Activated T-helper 1 cell treated with anti-CD3 and anti-CD28 coated beads, Interleukin-12 subunit alpha, Interleukin-12 subunit beta, Interleukin-2, Interleukin-4 antibody, amounts not matched to agents 30 ng/mL and 10 ng/mL and 1 ng/mL, durations not matched to agents 14 hours and 24 hours and 36 hours (primary cell): ENCODE measurements at regions of chr18 and their contacts with region 1.

Region 1: DNA sequence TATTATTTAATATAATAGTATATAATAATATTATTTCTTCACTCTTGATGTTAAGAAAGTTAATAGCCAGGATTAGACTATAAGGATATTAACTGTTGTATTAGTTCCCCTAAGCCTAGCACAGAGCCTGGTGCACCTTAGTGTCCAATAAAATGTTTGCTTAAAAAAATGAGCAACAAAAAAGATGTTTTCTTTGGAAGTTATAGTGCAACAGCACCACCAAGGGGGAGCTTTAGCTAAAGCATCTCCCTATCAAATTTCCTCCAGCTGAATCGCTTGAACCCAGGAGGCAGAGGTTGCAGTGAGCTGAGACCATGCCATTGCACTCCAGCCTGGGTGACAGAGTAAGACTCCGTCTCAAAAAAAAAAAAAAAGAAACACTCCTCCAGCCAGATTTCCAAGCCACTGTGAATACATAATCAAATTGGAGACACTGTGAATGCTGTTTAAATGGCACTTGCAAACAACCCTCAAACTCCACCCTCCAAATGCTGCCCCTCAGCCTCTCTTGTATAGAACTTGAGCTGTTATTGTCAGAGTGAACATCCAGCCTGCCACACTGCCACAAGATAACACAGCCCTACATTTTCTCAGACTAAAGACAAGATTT is 221.9 kb downstream of the DYM start:
- DNase-seq: no peak
- H3K4me3 Mint-ChIP-seq: no peak overlapping the region
- H3K27ac Mint-ChIP-seq: no peak overlapping the region
- H3K4me1 Mint-ChIP-seq: no peaks in the 10 kb centered on the region
- H3K27me3 Mint-ChIP-seq: no peaks in the 10 kb centered on the region

Region 2: GRCh38 chr18:49094979-49095632 is 143.4 kb before region 1 on chr18:
- intact Hi-C with region 1: loop called (anchors 5 kb)
- DNase-seq: no peak
- H3K4me3 Mint-ChIP-seq: no peak overlapping the region
- H3K27ac Mint-ChIP-seq: no peak overlapping the region
- H3K4me1 Mint-ChIP-seq: peaks cover 6% of the 10 kb centered on the region
- H3K27me3 Mint-ChIP-seq: no peaks in the 10 kb centered on the region

Region 3: DNA sequence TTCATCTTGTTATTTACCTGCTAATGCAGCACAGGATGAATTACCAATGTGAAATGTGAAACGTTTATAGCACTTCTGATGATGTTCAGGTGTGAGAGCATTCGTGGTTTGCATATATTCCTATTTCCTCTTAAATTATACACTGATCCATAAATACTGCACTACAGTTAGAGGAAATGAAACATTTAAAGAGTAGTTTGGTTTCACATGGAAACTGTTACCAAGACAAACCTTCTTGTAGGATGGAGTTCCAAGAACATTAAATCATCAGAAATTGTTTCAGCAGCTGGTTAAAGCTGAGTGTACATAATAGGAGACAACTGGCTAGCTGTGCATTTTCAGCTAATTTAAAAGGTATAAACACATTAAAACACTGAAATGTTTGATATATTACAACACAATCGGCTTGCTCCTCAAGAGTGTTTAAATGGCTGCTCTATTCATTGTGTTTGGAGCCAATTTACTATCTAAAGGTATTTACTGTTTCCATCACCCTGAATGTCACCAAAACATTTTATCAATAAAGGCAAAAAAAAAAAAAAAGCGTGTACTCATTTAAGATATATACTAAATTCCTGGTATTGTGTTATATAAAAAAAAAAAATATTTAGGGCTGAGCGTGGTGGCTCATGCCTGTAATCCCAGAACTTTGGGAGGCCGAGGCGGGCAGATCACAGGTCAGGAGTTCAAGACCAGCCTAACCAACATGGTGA is 121.3 kb after region 1 on chr18:
- intact Hi-C with region 1: no loop called
- DNase-seq: no peak
- H3K4me3 Mint-ChIP-seq: peak overlapping the region; percentile 45
- H3K27ac Mint-ChIP-seq: peak overlapping the region; percentile 29
- H3K4me1 Mint-ChIP-seq: peaks cover 16% of the 10 kb centered on the region
- H3K27me3 Mint-ChIP-seq: no peaks in the 10 kb centered on the region